Left colon (tissue), 2 donors: ENCODE measurements at regions of chrX and their contacts with region 1.

Region 1: GRCh38 chrX:37825209-37825842 is 22.0 kb downstream of the DYNLT3 start:
- DNase-seq: peak; percentile 32 to 62
- ATAC-seq: peak; percentile 82

Region 2: GRCh38 chrX:37509349-37509748 is 316.0 kb before region 1 on chrX:
- intact Hi-C with region 1: loop called in 1 of 2 experiments (anchors 5 kb)
- DNase-seq: no peak
- ATAC-seq: peak; percentile 59

Region 3: DNA sequence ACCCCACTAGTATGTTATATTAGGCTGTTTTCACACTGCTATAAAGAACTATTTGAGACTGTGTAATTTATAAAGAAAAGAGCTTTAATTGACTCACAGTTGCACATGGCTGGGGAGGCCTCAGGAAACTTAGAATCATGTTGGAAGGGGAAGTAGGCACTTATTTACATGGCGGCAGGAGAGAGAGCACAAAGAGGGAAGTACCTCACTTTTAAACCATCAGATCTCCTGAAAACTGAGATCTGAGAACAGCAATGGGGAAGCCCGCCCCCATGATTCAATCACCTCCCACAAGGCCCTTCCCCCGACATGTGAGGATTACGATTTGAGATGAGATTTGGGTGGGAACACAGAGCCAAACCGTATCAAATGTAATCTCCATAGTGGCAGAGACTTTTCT is 185.2 kb before region 1 on chrX:
- intact Hi-C with region 1: no loop called
- DNase-seq: no peak
- ATAC-seq: no peak

Region 4: DNA sequence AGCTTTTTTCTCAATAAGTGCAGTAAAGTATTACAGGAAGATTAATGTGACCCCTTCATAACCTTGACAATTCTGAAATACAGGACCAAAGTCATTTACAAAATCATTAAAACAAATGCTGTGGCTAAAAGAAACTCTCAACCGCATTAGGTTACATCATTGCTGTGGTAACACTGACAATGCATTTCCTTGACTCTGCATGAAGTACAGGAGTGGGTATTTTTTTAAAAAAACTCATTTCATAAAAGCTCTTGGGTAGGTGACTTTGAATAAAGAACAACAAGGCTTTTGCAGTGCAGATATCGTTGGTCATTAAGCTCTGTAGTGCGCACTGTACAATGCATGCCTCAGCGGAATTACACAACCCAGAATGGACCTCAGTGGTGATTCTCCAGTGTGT is 163.1 kb before region 1 on chrX:
- intact Hi-C with region 1: no loop called
- DNase-seq: no peak
- ATAC-seq: no peak

Region 5: GRCh38 chrX:37685452-37686353 is 139.6 kb before region 1 on chrX and contains the start of gene XK:
- intact Hi-C with region 1: no loop called
- DNase-seq: peak; percentile 67 to 70
- ATAC-seq: peak; percentile 82
- total RNA-seq, gene XK: 26.7 to 34.3 TPM

Region 6: GRCh38 chrX:37697169-37697760 is 128.1 kb before region 1 on chrX:
- intact Hi-C with region 1: no loop called
- DNase-seq: peak; percentile 20 to 38
- ATAC-seq: peak; percentile 82

Region 7: DNA sequence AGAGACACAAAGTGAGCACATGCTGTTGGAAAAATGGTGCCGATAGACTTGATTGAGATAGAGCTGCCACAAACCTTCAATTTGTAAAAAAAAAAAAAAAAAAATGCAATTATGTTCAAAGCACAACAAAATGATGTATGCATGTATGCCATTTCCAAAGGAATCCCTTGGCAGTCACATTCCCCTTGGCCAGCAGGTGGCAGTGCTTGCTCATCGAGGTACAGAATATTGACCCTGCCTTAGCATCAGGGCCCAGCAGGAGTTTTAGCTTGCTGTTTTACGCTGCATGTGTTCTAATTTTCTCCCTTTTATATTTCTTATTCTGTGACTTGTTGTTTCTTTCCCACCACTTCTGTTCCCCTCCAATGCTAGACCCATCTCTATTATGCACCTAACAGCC is 80.0 kb before region 1 on chrX:
- intact Hi-C with region 1: loop called in 1 of 2 experiments (anchors 2 kb)
- DNase-seq: peak; percentile 72 to 89
- ATAC-seq: peak; percentile 91